ENCODE measurements at regions of chr12 and their contacts with region 1.

Region 1: GRCh38 chr12:3658327-3659163 is 94.4 kb downstream of the CRACR2A start:
- DNase-seq: peak in 4 of 5 donors; percentile 22 to 38 (median 27)
- H3K4me3 ChIP-seq: no peak overlapping the region
- H3K4me3 Mint-ChIP-seq: no peak overlapping the region
- H3K27ac ChIP-seq: no peak overlapping the region
- H3K27ac Mint-ChIP-seq: peak overlapping the region in 1 of 7 donors; percentile 36
- H3K4me1 ChIP-seq: no peaks in the 10 kb centered on the region
- H3K4me1 Mint-ChIP-seq: no peaks in the 10 kb centered on the region
- H3K27me3 ChIP-seq: no peaks in the 10 kb centered on the region
- H3K27me3 Mint-ChIP-seq: no peaks in the 10 kb centered on the region

Region 2: DNA sequence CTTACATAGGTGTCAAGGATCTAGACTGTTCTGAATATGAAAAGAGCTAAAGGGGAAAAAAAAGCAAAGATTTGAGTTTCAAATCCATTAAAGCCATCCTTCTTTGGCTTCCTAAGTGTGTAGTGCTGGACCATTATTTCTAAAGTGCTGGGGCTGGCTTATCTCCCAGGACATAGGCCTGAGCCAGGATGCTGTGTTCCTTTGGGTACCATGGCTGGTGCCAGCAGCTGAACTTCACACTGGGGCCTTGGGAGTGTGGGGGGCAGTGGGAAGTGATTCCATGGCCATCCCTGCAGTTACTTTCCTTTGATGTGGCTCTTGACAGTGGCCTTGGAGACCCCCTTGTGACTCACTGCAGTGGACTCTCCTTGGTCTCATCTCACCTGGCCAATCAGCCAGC is 146.8 kb before region 1 on chr12:
- CTCF ChIA-PET with region 1: no interaction called
- POLR2A ChIA-PET with region 1: no interaction called
- intact Hi-C with region 1: no loop called
- DNase-seq: no peak
- H3K4me3 ChIP-seq: no peak overlapping the region
- H3K4me3 Mint-ChIP-seq: no peak overlapping the region
- H3K27ac ChIP-seq: no peak overlapping the region
- H3K27ac Mint-ChIP-seq: no peak overlapping the region
- H3K4me1 ChIP-seq: no peaks in the 10 kb centered on the region
- H3K4me1 Mint-ChIP-seq: no peaks in the 10 kb centered on the region
- H3K27me3 ChIP-seq: no peaks in the 10 kb centered on the region
- H3K27me3 Mint-ChIP-seq: peaks cover 40% of the 10 kb centered on the region in 2 donors

Region 3: GRCh38 chr12:3677609-3678008 is 19.1 kb after region 1 on chr12:
- CTCF ChIA-PET with region 1: interaction called, 14 read pairs
- POLR2A ChIA-PET with region 1: no interaction called
- intact Hi-C with region 1: no loop called
- DNase-seq: no peak
- H3K4me3 ChIP-seq: no peak overlapping the region
- H3K4me3 Mint-ChIP-seq: no peak overlapping the region
- H3K27ac ChIP-seq: no peak overlapping the region
- H3K27ac Mint-ChIP-seq: peak overlapping the region in 2 of 7 donors; percentile 4 to 75
- H3K4me1 ChIP-seq: no peaks in the 10 kb centered on the region
- H3K4me1 Mint-ChIP-seq: peaks cover 0 to 5% (median 0%) of the 10 kb centered on the region in 4 donors
- H3K27me3 ChIP-seq: no peaks in the 10 kb centered on the region
- H3K27me3 Mint-ChIP-seq: no peaks in the 10 kb centered on the region

Region 4: GRCh38 chr12:3777206-3777809 is 118.8 kb after region 1 on chr12:
- CTCF ChIA-PET with region 1: interaction called, 12 read pairs
- POLR2A ChIA-PET with region 1: no interaction called
- intact Hi-C with region 1: loop called (anchors 1 kb)
- DNase-seq: peak in 4 of 5 donors; percentile 37 to 45 (median 42)
- H3K4me3 ChIP-seq: no peak overlapping the region
- H3K4me3 Mint-ChIP-seq: no peak overlapping the region
- H3K27ac ChIP-seq: no peak overlapping the region
- H3K27ac Mint-ChIP-seq: no peak overlapping the region
- H3K4me1 ChIP-seq: peaks cover 5% of the 10 kb centered on the region
- H3K4me1 Mint-ChIP-seq: peaks cover 4 to 6% (median 5%) of the 10 kb centered on the region in 4 donors
- H3K27me3 ChIP-seq: no peaks in the 10 kb centered on the region
- H3K27me3 Mint-ChIP-seq: no peaks in the 10 kb centered on the region

Region 5: GRCh38 chr12:3803865-3804472 is 145.4 kb after region 1 on chr12:
- CTCF ChIA-PET with region 1: interaction called, 16 read pairs
- POLR2A ChIA-PET with region 1: no interaction called
- intact Hi-C with region 1: loop called (anchors 1 kb)
- DNase-seq: peak; percentile 54 to 60 (median 59)
- H3K4me3 ChIP-seq: no peak overlapping the region
- H3K4me3 Mint-ChIP-seq: no peak overlapping the region
- H3K27ac ChIP-seq: no peak overlapping the region
- H3K27ac Mint-ChIP-seq: peak overlapping the region in 1 of 7 donors; percentile 9
- H3K4me1 ChIP-seq: no peaks in the 10 kb centered on the region
- H3K4me1 Mint-ChIP-seq: peaks cover 0 to 3% (median 2%) of the 10 kb centered on the region in 4 donors
- H3K27me3 ChIP-seq: no peaks in the 10 kb centered on the region
- H3K27me3 Mint-ChIP-seq: no peaks in the 10 kb centered on the region

Measured in CD4-positive, alpha-beta memory T cell (primary cell).